A673 (cell line): ENCODE measurements at regions of chr7 and their contacts with region 1.

Region 1: DNA sequence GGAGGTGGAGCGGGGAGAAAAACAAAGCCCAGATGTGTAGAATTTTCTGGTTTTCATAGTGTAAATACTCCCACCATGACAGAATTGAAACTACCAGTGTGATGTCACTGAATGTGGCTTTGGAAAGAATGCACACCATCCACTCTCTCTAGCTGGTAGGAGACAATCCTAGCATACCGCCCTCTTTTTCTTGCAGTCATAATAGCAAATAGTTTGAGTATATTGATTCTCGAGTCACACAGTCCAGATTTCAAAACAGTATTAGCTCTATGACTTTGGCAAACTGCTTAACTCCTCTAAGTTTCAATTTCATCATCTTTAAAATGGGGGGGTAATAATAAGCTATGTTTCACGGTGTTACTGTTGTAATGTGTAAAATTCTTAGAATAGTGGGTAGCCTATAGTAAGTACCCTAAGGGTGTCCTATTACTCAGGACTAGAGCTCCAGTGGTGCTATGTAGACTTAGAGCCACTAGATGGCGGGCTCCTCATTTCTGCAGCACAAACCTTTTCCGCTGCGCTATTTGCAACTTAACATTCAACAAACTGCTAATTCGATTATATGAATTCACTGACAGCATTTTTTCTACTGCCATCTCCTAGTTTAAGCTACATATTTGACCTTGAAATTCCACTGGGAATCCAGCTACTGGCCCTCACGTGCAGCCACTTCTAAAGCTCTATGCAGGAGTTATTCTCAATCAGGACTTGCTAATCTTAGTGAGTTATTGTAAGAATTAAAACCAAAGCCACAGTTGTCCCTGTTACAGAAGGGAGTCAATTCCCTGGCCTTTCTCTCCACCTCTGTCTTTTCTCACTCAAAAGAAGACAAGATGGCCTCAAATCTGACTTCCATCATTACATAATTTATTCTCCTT is 18.7 kb downstream of the TAS2R40 start:
- DNase-seq: peak; percentile 86
- H3K4me3 ChIP-seq: no peak overlapping the region
- H3K27ac ChIP-seq: no peak overlapping the region
- H3K4me1 ChIP-seq: peaks cover 6% of the 10 kb centered on the region
- H3K27me3 ChIP-seq: no peaks in the 10 kb centered on the region
- CTCF ChIP-seq: peak; percentile 96

Region 2: DNA sequence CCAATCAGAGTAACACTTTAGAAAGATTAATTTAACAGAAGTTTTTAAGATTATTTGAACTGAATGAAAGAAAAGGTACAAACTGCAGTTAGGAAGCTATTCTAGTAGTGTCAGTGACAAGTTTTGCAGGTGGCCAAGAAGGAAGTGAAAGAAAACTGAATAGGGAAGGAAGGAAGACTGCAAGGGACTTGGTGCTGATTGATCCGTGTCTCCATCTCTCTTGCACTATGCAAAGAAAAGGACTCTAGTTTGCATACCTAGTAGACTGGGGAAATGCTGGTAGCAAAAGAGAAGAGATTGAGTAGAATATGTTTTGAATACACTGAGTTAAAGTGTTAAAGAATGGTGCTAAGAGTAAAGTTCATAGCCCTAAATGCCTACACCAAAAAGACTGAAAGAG is 155.4 kb before region 1 on chr7:
- CTCF ChIA-PET with region 1: no interaction called
- POLR2A ChIA-PET with region 1: no interaction called
- intact Hi-C with region 1: no loop called
- DNase-seq: no peak
- H3K4me3 ChIP-seq: no peak overlapping the region
- H3K27ac ChIP-seq: no peak overlapping the region
- H3K4me1 ChIP-seq: no peaks in the 10 kb centered on the region
- H3K27me3 ChIP-seq: no peaks in the 10 kb centered on the region
- CTCF ChIP-seq: no peak

Region 3: GRCh38 chr7:143299840-143300239 is 59.3 kb after region 1 on chr7:
- CTCF ChIA-PET with region 1: interaction called, 6 read pairs
- POLR2A ChIA-PET with region 1: interaction called, 5 read pairs
- intact Hi-C with region 1: loop called (anchors 1 kb)
- DNase-seq: peak; percentile 47
- H3K4me3 ChIP-seq: no peak overlapping the region
- H3K27ac ChIP-seq: no peak overlapping the region
- H3K4me1 ChIP-seq: peaks cover 28% of the 10 kb centered on the region
- H3K27me3 ChIP-seq: no peaks in the 10 kb centered on the region
- CTCF ChIP-seq: peak; percentile 80

Region 4: DNA sequence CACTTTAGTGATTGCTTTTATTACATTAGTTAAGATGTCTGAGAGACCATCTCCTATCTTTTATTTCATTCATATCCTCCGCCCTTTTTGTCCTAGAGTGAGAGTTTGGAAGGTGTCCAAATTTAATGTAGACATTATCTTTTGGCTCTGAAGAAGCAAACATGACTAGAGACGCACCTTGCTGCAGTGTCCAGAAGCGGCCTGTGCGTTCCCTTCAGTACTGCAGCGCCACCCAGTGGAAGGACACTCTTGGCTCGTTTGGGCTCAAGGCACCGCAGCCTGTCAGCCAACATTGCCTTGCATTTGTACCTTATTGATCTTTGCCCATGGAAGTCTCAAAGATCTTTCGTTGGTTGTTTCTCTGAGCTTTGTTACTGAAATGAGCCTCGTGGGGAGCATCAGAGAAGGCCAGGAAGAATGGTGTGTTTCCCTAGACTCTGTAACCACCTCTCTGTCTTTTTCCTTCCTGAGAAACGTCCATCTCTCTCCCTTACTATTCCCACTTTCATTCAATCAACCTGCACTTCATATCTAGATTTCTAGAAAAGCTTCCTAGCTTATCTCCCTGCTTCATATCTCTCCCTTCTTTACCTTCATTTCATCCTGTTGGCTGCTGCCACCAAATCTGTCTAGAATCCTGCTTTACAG is 65.0 kb after region 1 on chr7:
- CTCF ChIA-PET with region 1: interaction called, 4 read pairs
- POLR2A ChIA-PET with region 1: no interaction called
- intact Hi-C with region 1: loop called (anchors 1 kb)
- DNase-seq: peak; percentile 68
- H3K4me3 ChIP-seq: no peak overlapping the region
- H3K27ac ChIP-seq: no peak overlapping the region
- H3K4me1 ChIP-seq: no peaks in the 10 kb centered on the region
- H3K27me3 ChIP-seq: no peaks in the 10 kb centered on the region
- CTCF ChIP-seq: peak; percentile 87

Region 5: DNA sequence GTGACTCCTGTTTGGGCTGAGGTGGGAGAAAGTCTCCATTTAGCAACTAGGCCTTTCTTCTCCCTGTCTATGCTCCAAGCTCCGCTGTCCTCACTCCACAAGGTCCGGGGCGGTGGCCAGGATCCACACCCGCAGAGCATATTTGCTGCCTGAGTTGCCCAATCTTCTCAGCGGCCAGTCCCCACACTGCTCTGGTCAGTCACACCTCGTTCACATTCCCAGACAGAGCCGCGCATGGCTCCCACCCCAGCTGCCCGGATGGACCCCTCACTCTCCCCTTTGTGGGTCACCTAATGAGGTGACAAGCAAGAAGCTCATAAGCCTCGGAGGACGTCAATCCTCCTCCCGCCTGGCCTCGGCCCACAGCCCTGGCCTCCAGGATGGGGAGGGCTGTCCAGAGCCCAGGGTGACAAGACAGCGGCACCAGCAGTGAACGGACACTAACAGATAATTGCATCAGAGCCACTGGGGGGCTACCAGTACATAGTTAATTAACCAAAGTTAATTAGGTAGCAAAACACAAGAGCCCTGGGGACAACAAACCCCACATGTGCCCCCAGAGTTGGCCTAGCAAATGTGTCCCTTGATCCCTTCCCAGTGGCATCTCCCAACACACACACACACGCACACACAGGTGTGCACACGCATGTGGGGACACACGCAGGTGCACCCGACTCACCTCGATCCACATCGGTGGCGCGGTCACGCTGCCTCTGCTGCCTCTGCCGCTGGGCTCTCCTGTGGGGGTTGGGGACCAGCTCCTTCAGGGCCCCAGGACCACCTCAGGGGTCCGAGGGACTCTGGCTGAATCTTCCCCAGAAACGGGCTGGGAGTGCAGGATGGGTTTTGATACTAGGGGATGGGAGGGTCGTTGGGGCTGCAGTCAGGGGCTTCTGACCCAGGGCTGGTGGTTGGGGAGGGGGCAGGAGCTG is 156.4 kb after region 1 on chr7:
- CTCF ChIA-PET with region 1: interaction called, 12 read pairs
- POLR2A ChIA-PET with region 1: no interaction called
- intact Hi-C with region 1: no loop called
- DNase-seq: no peak
- H3K4me3 ChIP-seq: no peak overlapping the region
- H3K27ac ChIP-seq: no peak overlapping the region
- H3K4me1 ChIP-seq: no peaks in the 10 kb centered on the region
- H3K27me3 ChIP-seq: no peaks in the 10 kb centered on the region
- CTCF ChIP-seq: no peak

Region 6: DNA sequence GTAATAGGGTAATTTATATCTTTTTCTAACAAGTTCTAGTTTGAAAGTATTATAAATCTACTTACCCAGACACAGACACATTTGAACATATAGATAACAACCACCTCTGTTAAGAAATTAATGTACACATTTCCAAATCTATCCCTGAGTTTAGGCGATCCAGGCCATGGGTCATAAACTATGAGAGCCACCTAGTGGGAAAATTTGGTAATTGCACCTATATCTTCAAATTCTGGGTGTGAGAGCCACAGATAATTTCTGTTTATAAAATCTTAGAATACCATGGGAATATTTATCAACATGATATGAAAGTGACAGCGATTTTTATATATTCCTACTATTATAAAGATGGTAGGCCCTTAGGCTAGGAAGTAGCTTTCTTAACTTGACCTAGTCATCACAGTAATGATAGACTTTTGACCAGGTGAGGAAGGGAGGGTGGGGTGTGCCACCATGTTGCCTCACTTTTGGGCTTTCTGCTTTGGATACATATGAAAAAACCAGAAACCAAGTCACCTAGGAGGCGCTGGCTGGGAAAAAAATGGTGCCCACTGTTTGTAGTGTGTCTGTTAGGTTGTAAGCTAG is 176.1 kb after region 1 on chr7:
- CTCF ChIA-PET with region 1: interaction called, 5 read pairs
- POLR2A ChIA-PET with region 1: no interaction called
- intact Hi-C with region 1: loop called (anchors 1 kb)
- DNase-seq: peak; percentile 65
- H3K4me3 ChIP-seq: no peak overlapping the region
- H3K27ac ChIP-seq: no peak overlapping the region
- H3K4me1 ChIP-seq: peaks cover 5% of the 10 kb centered on the region
- H3K27me3 ChIP-seq: no peaks in the 10 kb centered on the region
- CTCF ChIP-seq: peak; percentile 83

Region 7: DNA sequence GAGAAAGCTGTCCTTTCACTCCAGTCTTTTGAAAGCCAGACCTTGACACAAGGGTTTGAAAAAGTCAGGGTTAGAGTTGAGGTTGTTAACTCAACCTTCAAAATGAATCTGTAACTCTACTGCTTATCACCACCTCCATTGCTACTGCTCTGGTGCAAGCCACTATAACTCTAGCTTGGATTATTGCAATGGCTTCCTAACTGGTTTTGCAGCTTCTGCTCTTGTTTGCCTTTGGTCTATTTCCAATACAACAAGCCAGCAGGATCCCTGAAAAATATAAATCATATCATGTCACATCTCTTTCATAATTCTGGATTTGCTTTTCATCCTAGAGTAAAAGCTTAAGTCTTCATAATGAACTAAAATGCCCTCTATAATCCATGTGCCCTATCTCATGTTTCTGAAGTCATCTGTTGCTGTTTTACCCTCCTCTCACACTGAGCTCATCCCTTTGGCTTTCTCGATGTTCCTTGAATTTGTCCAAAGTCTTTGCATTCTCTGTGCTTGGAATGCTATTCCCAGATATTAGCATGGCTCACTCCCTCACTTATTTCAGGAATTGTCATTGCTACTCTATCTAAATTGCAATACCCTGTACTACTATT is 213.6 kb after region 1 on chr7:
- CTCF ChIA-PET with region 1: no interaction called
- POLR2A ChIA-PET with region 1: no interaction called
- intact Hi-C with region 1: no loop called
- DNase-seq: no peak
- H3K4me3 ChIP-seq: no peak overlapping the region
- H3K27ac ChIP-seq: no peak overlapping the region
- H3K4me1 ChIP-seq: no peaks in the 10 kb centered on the region
- H3K27me3 ChIP-seq: no peaks in the 10 kb centered on the region
- CTCF ChIP-seq: no peak